ENCODE measurements at regions of chr13 and their contacts with region 1.

Region 1: GRCh38 chr13:28658796-28659620 is at the start of gene POMP:
- DNase-seq: peak; percentile 80
- ATAC-seq: peak; percentile 99
- H3K4me3 ChIP-seq: peak within 1 kb of the TSS; percentile 91 to 96 (median 95)
- H3K27ac ChIP-seq: peak within 1 kb of the TSS; percentile 72
- H3K4me1 ChIP-seq: peaks cover 51% of the 10 kb centered on the region
- H3K27me3 ChIP-seq: no peaks in the 10 kb centered on the region; a peak in 1 of 5 replicates
- CTCF ChIP-seq: peak; percentile 17
- EP300 ChIP-seq: no peak; a peak in 1 of 4 replicates
- POLR2A ChIP-seq: peak; percentile 70 to 94
- RAD21 ChIP-seq: no peak
- total RNA-seq, gene POMP: 118 and 183 TPM in 2 replicates

Region 2: GRCh38 chr13:28394422-28394821 is 264.6 kb before region 1 on chr13:
- CTCF ChIA-PET with region 1: no interaction called
- POLR2A ChIA-PET with region 1: no interaction called
- in situ Hi-C with region 1: no loop called
- intact Hi-C with region 1: no loop called
- DNase-seq: no peak
- ATAC-seq: no peak
- H3K4me3 ChIP-seq: no peak overlapping the region
- H3K27ac ChIP-seq: no peak overlapping the region
- H3K4me1 ChIP-seq: 0 out of 2 replicates have a peak, but pooled peaks cover 6% of the 10 kb centered on the region
- H3K27me3 ChIP-seq: no peaks in the 10 kb centered on the region; a peak in 1 of 5 replicates
- CTCF ChIP-seq: no peak
- EP300 ChIP-seq: no peak
- POLR2A ChIP-seq: no peak
- RAD21 ChIP-seq: no peak

Region 3: DNA sequence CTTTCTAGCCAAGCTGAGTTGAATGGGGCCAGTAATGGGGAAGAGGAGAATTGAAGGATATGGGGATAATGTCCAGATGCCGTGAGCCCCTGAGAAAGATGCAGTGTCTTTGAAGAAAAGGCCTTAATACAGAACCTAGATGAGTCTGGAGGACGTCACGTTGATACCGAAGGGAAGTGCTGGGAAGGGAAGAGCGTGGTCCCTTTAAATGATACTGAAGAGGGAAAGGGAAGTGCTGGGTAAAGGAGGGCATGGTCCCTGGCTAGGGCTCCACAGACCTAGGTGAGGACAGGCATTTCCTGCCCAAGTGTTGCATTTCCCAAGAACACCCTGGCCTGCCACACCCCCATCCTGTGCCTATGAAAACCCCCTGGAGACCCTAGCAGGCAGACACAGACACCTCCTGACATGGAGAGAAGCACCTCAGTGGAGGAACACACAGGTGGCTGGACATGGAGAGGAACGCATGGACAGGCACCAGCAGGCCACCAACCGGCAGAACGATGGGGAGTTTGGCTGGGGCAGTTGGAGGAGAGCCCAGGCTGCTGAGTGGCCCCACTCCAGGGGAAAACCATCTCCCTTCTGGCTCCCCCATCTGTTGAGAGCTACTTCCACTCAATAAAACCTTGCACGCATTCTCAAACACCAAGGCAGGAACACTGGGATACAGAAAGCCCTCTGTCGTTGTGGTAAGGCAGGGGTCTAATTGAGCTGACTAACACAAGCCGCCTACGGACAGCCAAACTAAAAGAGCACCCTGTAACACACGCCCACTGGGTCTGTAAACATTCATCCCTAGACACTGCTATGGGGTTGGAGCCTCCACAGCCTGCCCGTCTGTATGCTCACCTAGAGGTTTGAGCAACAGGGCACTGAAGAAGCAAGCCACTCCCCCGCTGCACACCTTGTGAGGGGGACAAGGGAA is 35.0 kb before region 1 on chr13:
- CTCF ChIA-PET with region 1: no interaction called
- POLR2A ChIA-PET with region 1: no interaction called
- in situ Hi-C with region 1: no loop called
- intact Hi-C with region 1: no loop called
- DNase-seq: no peak
- ATAC-seq: peak; percentile 54
- H3K4me3 ChIP-seq: no peak overlapping the region
- H3K27ac ChIP-seq: no peak overlapping the region
- H3K4me1 ChIP-seq: no peaks in the 10 kb centered on the region
- H3K27me3 ChIP-seq: no peaks in the 10 kb centered on the region; a peak in 2 of 5 replicates
- CTCF ChIP-seq: no peak
- EP300 ChIP-seq: no peak
- POLR2A ChIP-seq: no peak
- RAD21 ChIP-seq: no peak

Region 4: DNA sequence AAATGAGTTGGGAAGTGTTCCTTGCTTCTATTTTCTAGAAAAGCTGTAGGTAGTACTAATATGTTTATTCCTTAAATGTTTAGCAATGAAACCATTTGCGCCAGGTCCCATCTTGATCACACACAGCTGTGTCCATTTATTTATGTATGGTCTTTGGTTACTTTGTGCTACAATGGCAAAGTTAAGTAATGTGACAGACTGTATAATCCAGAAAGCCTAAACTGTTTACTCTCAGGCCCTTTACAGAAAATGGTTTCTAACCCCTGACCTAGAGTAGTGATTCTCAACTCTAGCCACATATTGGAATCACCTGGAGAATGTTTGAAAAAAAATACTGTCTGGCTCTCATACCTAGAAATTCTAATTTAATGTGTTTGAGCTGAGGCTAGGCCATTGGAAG is 38.4 kb after region 1 on chr13:
- CTCF ChIA-PET with region 1: no interaction called
- POLR2A ChIA-PET with region 1: interaction called, 11 read pairs
- in situ Hi-C with region 1: no loop called
- intact Hi-C with region 1: no loop called
- DNase-seq: no peak
- ATAC-seq: no peak
- H3K4me3 ChIP-seq: no peak overlapping the region
- H3K27ac ChIP-seq: no peak overlapping the region
- H3K4me1 ChIP-seq: peaks cover 14% of the 10 kb centered on the region
- H3K27me3 ChIP-seq: no peaks in the 10 kb centered on the region; a peak in 1 of 5 replicates
- CTCF ChIP-seq: no peak
- EP300 ChIP-seq: no peak
- POLR2A ChIP-seq: no peak
- RAD21 ChIP-seq: no peak

Measured in HepG2 (cell line).